ENCODE measurements at regions of chr20 and their contacts with region 1.

Region 1: GRCh38 chr20:9392892-9393857 is 121.2 kb upstream of the LAMP5 start:
- DNase-seq: peak; percentile 79
- ATAC-seq: peak; percentile 99
- H3K4me3 Mint-ChIP-seq: no peak overlapping the region
- H3K27ac Mint-ChIP-seq: no peak overlapping the region
- H3K4me1 Mint-ChIP-seq: peaks cover 18% of the 10 kb centered on the region
- H3K27me3 Mint-ChIP-seq: no peaks in the 10 kb centered on the region; the same call in 1 of the 2 replicates
- CTCF ChIP-seq: no peak; the same call in 1 of the 2 replicates

Region 2: DNA sequence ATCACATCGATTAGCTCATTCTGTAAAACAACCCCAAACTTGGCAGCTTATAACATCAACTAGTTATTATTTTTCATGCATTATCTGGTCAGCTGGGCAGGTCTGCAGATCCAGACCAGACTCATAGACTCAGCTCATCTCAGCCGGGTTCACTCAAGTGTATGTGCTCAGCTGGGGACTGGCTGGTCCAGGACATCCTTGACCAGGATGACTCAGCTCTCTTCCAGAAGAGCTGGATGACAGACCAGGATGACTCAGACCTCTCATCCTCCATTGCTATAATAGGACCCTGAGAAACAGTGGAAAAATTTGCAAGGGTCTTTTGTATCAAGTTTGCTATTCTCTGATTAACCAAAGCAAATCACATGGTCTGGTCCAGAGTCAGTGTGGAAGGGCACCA is 636.8 kb before region 1 on chr20:
- CTCF ChIA-PET with region 1: interaction called, 39 read pairs
- POLR2A ChIA-PET with region 1: no interaction called
- DNase-seq: no peak
- ATAC-seq: no peak
- H3K4me3 Mint-ChIP-seq: no peak overlapping the region
- H3K27ac Mint-ChIP-seq: no peak overlapping the region
- H3K4me1 Mint-ChIP-seq: no peaks in the 10 kb centered on the region
- H3K27me3 Mint-ChIP-seq: no peaks in the 10 kb centered on the region
- CTCF ChIP-seq: no peak

Region 3: GRCh38 chr20:8812817-8813216 is 580.4 kb before region 1 on chr20:
- CTCF ChIA-PET with region 1: interaction called, 14 read pairs
- POLR2A ChIA-PET with region 1: no interaction called
- DNase-seq: peak; percentile 22
- ATAC-seq: peak; percentile 79
- H3K4me3 Mint-ChIP-seq: no peak overlapping the region
- H3K27ac Mint-ChIP-seq: peak overlapping the region; percentile 84
- H3K4me1 Mint-ChIP-seq: peaks cover 53% of the 10 kb centered on the region
- H3K27me3 Mint-ChIP-seq: no peaks in the 10 kb centered on the region
- CTCF ChIP-seq: no peak

Region 4: DNA sequence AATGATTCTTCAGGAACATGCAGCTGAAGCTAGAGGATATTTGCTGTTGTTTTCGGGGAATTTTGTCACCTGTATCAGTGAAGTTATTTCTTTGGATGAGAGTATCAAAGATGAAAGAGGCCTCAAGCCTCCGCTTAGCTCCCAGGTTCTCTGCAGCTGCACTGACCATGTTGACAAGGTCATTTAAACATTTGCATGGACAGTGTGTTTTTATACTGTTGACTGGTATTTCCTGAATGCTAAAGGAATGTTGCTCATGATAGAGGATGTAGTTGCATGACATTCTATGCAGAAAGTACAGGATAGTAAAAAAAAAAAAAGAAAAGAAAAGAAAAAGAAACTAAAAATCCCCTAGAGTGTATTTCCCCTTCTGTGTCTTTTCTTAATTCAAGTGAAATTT is 44.4 kb before region 1 on chr20:
- CTCF ChIA-PET with region 1: interaction called, 10 read pairs
- POLR2A ChIA-PET with region 1: no interaction called
- DNase-seq: no peak
- ATAC-seq: no peak
- H3K4me3 Mint-ChIP-seq: no peak overlapping the region
- H3K27ac Mint-ChIP-seq: peak overlapping the region; percentile 44; the same call in 1 of the 2 replicates
- H3K4me1 Mint-ChIP-seq: peaks cover 27% of the 10 kb centered on the region
- H3K27me3 Mint-ChIP-seq: no peaks in the 10 kb centered on the region
- CTCF ChIP-seq: no peak

Region 5: DNA sequence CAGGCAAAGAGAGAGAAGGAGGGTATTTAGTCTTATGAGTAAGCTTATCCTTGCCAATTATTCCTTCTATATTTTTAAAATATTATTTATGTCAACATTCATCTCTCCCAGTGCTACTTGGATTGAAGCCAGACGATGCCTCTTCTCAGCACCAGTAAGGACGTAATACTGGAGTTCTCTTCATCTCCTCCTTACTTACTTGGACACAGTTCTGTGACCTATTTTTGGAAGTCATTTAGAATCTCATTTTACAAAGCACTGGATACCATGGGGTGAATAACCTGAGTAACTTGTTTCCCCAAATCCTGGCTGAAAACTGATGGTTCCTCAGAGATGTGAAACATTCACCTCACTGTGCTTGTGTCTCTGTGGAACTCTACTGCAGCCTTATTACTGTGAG is 16.2 kb before region 1 on chr20:
- CTCF ChIA-PET with region 1: interaction called, 12 read pairs
- POLR2A ChIA-PET with region 1: no interaction called
- DNase-seq: no peak
- ATAC-seq: no peak
- H3K4me3 Mint-ChIP-seq: no peak overlapping the region
- H3K27ac Mint-ChIP-seq: no peak overlapping the region
- H3K4me1 Mint-ChIP-seq: peaks cover 53% of the 10 kb centered on the region
- H3K27me3 Mint-ChIP-seq: no peaks in the 10 kb centered on the region
- CTCF ChIP-seq: no peak

Region 6: GRCh38 chr20:9594284-9594875 is 201.2 kb after region 1 on chr20:
- CTCF ChIA-PET with region 1: no interaction called
- POLR2A ChIA-PET with region 1: no interaction called
- DNase-seq: no peak
- ATAC-seq: no peak
- H3K4me3 Mint-ChIP-seq: no peak overlapping the region
- H3K27ac Mint-ChIP-seq: no peak overlapping the region
- H3K4me1 Mint-ChIP-seq: peaks cover 5% of the 10 kb centered on the region; the same call in 1 of the 2 replicates
- H3K27me3 Mint-ChIP-seq: peaks cover 2% of the 10 kb centered on the region; the same call in 1 of the 2 replicates
- CTCF ChIP-seq: no peak

Measured in WTC11 (cell line).